Aorta (tissue), 5 donors: ENCODE measurements at regions of chr15 and their contacts with region 1.

Region 1: DNA sequence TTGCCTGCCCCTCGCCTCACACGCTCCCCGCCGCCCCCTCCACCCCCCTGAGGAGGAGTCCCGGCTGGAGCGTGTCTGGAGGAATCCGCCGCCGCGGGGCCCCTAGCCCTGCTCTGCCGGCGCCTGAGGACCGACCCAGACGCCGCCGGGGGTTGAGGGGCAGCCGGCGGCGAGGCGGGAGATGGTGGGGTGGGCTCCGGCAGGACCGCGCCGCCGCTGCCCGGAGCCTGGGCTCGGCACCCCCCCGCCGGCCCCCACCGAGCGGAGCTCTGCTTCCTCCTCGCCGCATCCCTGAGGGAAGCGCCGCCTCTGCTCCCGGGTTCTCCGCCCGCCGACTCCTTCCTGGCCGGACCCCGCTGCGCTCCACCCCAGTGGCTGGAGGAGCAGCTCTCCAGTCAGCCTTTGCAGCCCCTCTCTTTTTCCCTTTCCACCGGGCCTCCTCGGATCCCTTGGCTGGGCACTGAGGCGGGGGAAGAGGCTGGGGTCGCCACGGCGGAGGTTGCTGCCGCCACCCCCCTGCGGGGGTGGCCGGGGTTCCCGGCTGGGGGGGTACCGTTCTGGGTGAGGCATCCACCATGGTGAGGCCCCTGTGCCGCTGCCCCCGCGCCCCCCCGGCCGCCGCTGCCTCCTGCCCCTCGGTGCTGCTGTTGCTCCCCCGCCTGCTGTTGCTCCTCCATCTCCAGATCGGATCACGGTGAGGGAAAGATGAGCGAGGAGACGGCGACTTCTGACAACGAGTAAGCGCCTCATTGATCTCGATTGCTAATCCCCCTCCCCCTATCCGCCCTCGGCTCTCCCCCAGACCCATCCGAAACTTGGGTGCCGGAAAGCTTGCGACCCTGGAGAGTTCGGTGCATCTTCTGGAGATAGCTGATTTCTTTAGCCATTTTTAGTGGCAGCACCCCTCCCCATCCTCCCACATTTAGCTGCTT is at the start of gene SPRED1:
- DNase-seq: peak; percentile 88 to 92
- ATAC-seq: peak; percentile 88
- H3K4me3 ChIP-seq: peak within 1 kb of the TSS; percentile 62 to 95
- H3K27ac ChIP-seq: peak within 1 kb of the TSS; percentile 91 to 97
- H3K4me1 ChIP-seq: no peaks in the 10 kb centered on the region
- H3K27me3 ChIP-seq: no peaks in the 10 kb centered on the region
- total RNA-seq, gene SPRED1: 39.4 to 54.6 TPM

Region 2: DNA sequence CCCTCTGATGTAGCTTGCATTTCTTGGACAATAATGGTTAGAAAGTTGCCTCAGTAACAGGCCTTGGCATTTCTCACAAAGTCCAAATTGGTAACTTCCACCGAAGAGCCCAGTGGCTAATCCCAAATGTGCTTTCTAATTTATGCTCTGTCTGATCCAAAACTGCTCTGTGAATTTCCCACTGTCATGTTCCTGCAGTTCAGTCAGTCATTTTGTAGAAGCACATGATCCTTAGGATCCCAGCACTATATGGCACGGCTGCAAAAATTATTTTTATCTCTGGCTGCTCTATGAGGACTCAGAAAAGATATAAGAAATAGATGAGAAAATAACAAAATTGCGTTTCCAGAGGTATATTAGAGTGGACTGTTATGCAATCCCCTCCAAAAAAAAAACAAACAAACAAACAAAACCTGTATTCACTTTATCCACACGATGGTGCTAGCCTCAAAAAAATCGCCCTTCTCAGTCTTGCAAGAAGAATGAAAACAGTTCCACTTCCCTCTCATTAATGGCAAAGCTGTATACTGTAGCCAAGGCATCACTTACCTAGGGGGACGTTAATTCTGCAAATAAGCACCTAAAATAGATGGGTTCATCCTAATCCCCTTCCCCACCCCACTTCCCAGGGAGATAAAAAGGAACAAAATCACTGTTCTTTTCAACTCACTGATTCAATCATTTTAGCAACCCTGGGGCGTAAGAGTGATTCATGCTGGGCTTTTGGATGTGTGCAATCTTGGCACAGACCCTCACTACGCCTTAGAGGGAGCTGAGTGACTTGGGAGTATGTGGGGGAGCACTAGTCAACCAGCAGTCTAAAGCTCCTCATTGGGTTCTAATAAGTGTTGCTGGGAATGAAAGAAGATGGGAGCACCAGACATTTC is 257.0 kb before region 1 on chr15:
- intact Hi-C with region 1: loop called in 1 of 2 experiments (anchors 10 kb)
- DNase-seq: no peak
- ATAC-seq: peak; percentile 71
- H3K4me3 ChIP-seq: no peak overlapping the region
- H3K27ac ChIP-seq: no peak overlapping the region
- H3K4me1 ChIP-seq: no peaks in the 10 kb centered on the region
- H3K27me3 ChIP-seq: no peaks in the 10 kb centered on the region

Region 3: DNA sequence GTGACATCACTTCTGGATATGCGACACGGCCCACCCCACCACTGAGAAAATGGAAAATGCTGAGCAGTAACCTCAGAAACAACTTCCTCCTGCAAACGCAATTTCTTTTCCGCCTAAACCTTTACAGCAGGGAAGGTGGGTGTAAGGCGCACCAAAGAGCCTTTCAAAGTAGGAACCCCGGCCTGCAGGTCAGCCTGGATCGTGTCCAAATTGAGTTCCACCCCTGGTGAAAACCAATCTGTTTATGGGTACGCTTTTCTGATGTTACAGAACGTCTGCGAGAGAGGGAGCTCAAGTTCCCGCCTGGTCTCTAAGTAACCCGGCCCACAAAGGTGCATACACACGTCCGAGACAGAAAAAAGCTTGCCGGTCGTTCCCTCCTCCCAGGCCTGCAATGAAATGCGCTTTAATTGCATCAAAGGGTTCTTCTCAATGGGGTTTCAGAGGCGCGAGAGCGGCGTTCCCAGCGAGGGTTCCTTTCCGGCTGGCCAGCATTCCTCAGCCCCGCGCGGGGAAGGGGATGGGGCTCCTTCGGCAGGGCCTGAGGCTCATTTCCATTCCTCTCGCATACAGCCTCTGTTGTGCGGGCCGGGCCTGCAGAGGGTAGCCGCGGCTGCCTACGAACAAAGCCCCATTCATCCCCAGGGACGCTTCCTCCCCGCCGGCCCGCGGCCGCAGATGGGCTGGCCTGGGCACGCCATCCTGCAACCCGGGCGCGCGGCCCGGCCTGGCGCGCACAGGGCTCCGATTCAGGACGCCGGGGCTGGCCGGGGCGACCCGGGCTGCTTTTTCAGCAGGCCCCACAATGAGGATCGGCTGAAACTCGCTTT is 180.2 kb before region 1 on chr15:
- intact Hi-C with region 1: loop called (anchors 2 kb)
- DNase-seq: peak; percentile 76 to 89
- ATAC-seq: peak; percentile 91
- H3K4me3 ChIP-seq: peak overlapping the region; percentile 9 to 15
- H3K27ac ChIP-seq: peak overlapping the region; percentile 92
- H3K4me1 ChIP-seq: no peaks in the 10 kb centered on the region
- H3K27me3 ChIP-seq: no peaks in the 10 kb centered on the region

Region 4: DNA sequence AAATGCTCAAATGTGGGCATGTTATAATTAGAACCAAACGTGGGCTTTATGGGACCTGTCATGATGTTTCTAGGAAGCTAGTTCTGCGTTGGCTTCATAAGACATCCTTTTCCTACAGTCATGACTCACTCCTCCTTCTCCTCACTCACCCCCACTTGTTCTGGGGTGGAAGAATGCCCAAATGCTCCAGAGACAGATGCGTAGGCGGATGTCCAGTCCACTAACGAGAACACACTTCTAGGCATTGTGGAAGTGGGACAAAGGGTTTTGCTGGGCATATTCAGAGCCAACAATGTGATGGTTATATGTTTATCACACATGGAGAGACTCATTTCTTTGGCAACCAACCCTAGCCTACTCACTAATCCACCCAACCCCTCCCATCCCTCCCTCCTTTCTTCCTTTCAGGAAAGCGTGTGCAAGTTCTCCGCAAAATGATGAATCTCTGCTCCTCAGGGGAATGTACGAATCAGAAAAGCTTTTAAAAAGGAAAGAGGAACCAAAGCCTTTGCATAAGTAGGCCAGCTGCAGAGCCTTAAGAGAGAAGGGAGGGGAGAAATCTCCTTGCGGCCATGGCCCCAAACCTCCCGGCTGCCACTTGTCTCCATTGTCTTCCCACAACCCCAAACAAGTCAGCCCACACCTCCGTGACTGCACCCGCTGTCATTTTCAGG is 123.1 kb before region 1 on chr15:
- intact Hi-C with region 1: loop called in 1 of 2 experiments (anchors 5 kb)
- DNase-seq: peak; percentile 79 to 86
- ATAC-seq: peak; percentile 89
- H3K4me3 ChIP-seq: no peak overlapping the region
- H3K27ac ChIP-seq: peak overlapping the region in 1 of 2 donors; percentile 57
- H3K4me1 ChIP-seq: no peaks in the 10 kb centered on the region
- H3K27me3 ChIP-seq: no peaks in the 10 kb centered on the region

Region 5: GRCh38 chr15:38316311-38316710 is 63.6 kb after region 1 on chr15:
- intact Hi-C with region 1: loop called in 1 of 2 experiments (anchors 5 kb)
- DNase-seq: no peak
- ATAC-seq: no peak
- H3K4me3 ChIP-seq: no peak overlapping the region
- H3K27ac ChIP-seq: no peak overlapping the region
- H3K4me1 ChIP-seq: peaks cover 0 to 5% of the 10 kb centered on the region in 2 donors
- H3K27me3 ChIP-seq: no peaks in the 10 kb centered on the region

Region 6: DNA sequence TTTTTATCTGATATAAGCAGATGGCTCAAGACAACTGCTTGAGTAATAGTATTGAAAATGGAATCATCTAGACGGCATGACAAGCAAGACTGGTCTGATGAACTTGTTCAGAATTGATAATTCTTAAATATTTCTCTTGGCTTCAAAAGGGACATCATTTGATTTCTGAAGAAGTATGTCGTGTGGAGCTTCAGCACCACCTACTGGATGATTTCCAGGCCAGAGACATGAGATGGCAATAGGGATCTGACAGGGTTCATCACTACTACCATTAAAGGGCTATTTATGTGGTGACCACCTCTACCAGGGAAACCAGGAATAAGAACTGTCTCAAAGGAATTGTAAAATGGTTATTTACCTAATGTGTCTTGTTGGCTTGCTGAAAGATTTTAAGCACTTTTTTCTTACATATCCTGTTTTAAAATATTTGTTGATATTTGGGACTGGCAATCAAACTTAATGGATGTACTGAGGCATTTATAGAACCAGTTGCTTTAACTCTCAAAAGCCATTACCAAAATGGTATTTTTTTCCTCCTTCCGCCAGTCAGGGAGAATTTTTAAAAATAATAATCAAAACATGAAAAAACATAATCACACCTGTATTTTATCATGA is 101.7 kb after region 1 on chr15:
- intact Hi-C with region 1: loop called in 1 of 2 experiments (anchors 5 kb)
- DNase-seq: peak in 1 of 2 donors; percentile 59
- ATAC-seq: no peak
- H3K4me3 ChIP-seq: no peak overlapping the region
- H3K27ac ChIP-seq: no peak overlapping the region
- H3K4me1 ChIP-seq: no peaks in the 10 kb centered on the region
- H3K27me3 ChIP-seq: no peaks in the 10 kb centered on the region

Region 7: GRCh38 chr15:38424101-38424552 is 171.4 kb after region 1 on chr15:
- intact Hi-C with region 1: no loop called
- DNase-seq: no peak
- ATAC-seq: no peak
- H3K4me3 ChIP-seq: no peak overlapping the region
- H3K27ac ChIP-seq: no peak overlapping the region
- H3K4me1 ChIP-seq: no peaks in the 10 kb centered on the region
- H3K27me3 ChIP-seq: no peaks in the 10 kb centered on the region